A549 (cell line): ENCODE measurements at regions of chr14 and their contacts with region 1.

Region 1: DNA sequence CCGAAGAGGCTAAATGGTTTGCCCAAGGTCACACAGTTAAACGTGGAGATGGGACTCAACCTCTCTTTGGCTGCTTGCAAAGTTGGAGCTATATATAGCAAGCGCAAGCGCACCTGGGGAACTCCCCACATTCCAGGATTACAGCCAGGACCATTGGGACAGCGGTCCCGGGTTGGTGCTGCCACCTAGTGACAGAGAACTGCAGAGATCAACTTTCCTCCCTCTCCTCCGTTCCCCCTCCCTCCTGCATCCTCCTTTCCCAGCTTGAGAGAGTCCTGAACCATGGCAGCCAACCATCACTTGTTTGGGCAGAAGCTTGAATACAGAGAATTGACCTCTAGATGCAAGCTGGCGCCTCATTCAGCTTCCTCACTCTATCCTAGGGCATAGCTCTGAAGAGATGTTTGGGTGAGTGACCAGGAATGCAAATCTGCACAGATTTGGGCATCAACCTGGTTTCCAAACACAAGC is 17.4 kb upstream of the FLVCR2 start:
- DNase-seq: peak; percentile 87 to 90
- ATAC-seq: peak; percentile 90 to 94
- H3K4me3 ChIP-seq: 0 out of 3 replicates have a peak overlapping the region, but pooled peaks have one; percentile 9
- H3K27ac ChIP-seq: peak overlapping the region; percentile 84 to 90
- H3K4me1 ChIP-seq: peaks cover 27% of the 10 kb centered on the region
- CTCF ChIP-seq: peak; percentile 93
- EP300 ChIP-seq: 0 out of 5 replicates have a peak, but pooled peaks of 1 of the 2 experiments have one; percentile 24
- POLR2A ChIP-seq: no peak
- RAD21 ChIP-seq: peak; percentile 97 to 98

Region 2: GRCh38 chr14:75322746-75323145 is 238.3 kb before region 1 on chr14:
- CTCF ChIA-PET with region 1: interaction called, 11 read pairs
- POLR2A ChIA-PET with region 1: no interaction called
- DNase-seq: no peak
- ATAC-seq: no peak
- H3K4me3 ChIP-seq: no peak overlapping the region
- H3K27ac ChIP-seq: no peak overlapping the region
- H3K4me1 ChIP-seq: no peaks in the 10 kb centered on the region
- CTCF ChIP-seq: no peak
- EP300 ChIP-seq: no peak
- POLR2A ChIP-seq: no peak
- RAD21 ChIP-seq: no peak

Region 3: DNA sequence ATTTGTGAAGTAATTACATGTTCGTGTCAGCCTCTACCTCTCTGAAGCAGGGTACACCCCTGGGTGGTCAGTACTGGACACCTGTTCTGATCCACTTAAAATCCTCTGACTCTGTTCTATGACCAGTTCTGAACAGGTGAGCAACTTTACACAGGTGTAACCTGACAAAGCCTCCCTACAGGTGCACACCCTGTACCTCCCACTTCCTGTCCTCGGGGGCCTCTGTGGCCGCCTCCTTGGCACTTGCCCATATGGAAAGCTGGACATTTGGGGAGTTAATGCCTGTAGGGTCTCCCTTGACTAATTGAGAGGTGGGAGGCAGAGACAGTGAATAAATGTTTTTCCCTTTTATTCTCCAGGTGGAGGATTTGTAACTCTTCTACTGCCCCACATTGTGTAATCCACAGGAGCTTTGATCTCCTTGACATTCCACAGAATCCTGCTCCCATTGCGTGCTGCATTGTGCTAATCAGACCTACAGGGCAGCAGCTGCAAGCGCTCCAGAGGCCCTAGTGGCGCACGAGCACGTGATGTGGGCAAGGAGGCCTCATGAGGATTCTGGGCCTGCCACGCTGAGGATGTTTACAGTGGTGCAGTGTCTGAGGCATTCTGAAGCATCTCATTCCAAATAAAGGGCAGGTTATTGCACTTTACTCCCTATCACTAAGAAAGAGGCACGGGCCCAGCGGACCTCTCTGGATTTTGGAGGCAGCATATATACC is 84.6 kb before region 1 on chr14:
- CTCF ChIA-PET with region 1: interaction called, 18 read pairs
- POLR2A ChIA-PET with region 1: no interaction called
- DNase-seq: no peak
- ATAC-seq: peak in 1 of 2 experiments; percentile 31; a peak in 3 of 6 replicates
- H3K4me3 ChIP-seq: no peak overlapping the region
- H3K27ac ChIP-seq: no peak overlapping the region
- H3K4me1 ChIP-seq: no peaks in the 10 kb centered on the region
- CTCF ChIP-seq: no peak
- EP300 ChIP-seq: no peak
- POLR2A ChIP-seq: no peak
- RAD21 ChIP-seq: no peak

Region 4: GRCh38 chr14:75514673-75515628 is 46.0 kb before region 1 on chr14:
- CTCF ChIA-PET with region 1: interaction called, 50 read pairs
- POLR2A ChIA-PET with region 1: no interaction called
- DNase-seq: no peak
- ATAC-seq: no peak
- H3K4me3 ChIP-seq: no peak overlapping the region
- H3K27ac ChIP-seq: peak overlapping the region in 1 of 2 experiments; percentile 46; a peak in 3 of 6 replicates
- H3K4me1 ChIP-seq: peaks cover 7% of the 10 kb centered on the region
- CTCF ChIP-seq: no peak
- EP300 ChIP-seq: no peak
- POLR2A ChIP-seq: no peak
- RAD21 ChIP-seq: no peak

Region 5: GRCh38 chr14:75549169-75549568 is 11.8 kb before region 1 on chr14:
- CTCF ChIA-PET with region 1: interaction called, 31 read pairs
- POLR2A ChIA-PET with region 1: no interaction called
- DNase-seq: no peak
- ATAC-seq: no peak
- H3K4me3 ChIP-seq: no peak overlapping the region
- H3K27ac ChIP-seq: peak overlapping the region; percentile 56 to 82; a peak in 5 of 6 replicates
- H3K4me1 ChIP-seq: peaks cover 39% of the 10 kb centered on the region
- CTCF ChIP-seq: no peak
- EP300 ChIP-seq: no peak
- POLR2A ChIP-seq: no peak
- RAD21 ChIP-seq: no peak

Region 6: GRCh38 chr14:76050797-76051392 is 489.9 kb after region 1 on chr14:
- CTCF ChIA-PET with region 1: no interaction called
- POLR2A ChIA-PET with region 1: no interaction called
- DNase-seq: peak; percentile 55 to 60
- ATAC-seq: peak; percentile 75 to 87
- H3K4me3 ChIP-seq: no peak overlapping the region
- H3K27ac ChIP-seq: no peak overlapping the region
- H3K4me1 ChIP-seq: no peaks in the 10 kb centered on the region
- CTCF ChIP-seq: peak; percentile 89
- EP300 ChIP-seq: no peak
- POLR2A ChIP-seq: no peak
- RAD21 ChIP-seq: peak; percentile 85 to 93